Right cardiac atrium (tissue), 5 donors: ENCODE measurements at regions of chr3 and their contacts with region 1.

Region 1: DNA sequence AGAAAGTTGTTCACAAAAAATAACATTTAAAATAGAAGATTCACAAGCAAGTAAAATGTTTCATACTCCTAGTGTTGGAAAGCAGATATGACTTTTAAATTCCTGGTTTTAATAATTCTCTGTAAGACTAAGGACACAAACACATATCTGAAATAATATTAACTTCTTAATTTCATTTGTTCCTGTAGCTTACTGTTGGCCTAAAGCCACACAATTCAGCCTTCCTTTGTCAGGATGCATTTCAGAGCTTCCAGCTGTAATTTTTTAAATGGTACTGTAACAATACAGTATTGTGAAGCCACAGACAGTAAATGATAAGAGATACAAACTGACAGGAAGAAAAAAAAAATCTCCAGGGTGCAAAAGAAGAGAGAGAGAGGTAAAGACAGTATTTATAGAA is 84.2 kb downstream of the TMCC1 start:
- DNase-seq: no peak
- ATAC-seq: no peak
- H3K4me3 ChIP-seq: no peak overlapping the region
- H3K27ac ChIP-seq: no peak overlapping the region
- H3K4me1 ChIP-seq: peaks cover 1% of the 10 kb centered on the region
- H3K27me3 ChIP-seq: no peaks in the 10 kb centered on the region

Region 2: DNA sequence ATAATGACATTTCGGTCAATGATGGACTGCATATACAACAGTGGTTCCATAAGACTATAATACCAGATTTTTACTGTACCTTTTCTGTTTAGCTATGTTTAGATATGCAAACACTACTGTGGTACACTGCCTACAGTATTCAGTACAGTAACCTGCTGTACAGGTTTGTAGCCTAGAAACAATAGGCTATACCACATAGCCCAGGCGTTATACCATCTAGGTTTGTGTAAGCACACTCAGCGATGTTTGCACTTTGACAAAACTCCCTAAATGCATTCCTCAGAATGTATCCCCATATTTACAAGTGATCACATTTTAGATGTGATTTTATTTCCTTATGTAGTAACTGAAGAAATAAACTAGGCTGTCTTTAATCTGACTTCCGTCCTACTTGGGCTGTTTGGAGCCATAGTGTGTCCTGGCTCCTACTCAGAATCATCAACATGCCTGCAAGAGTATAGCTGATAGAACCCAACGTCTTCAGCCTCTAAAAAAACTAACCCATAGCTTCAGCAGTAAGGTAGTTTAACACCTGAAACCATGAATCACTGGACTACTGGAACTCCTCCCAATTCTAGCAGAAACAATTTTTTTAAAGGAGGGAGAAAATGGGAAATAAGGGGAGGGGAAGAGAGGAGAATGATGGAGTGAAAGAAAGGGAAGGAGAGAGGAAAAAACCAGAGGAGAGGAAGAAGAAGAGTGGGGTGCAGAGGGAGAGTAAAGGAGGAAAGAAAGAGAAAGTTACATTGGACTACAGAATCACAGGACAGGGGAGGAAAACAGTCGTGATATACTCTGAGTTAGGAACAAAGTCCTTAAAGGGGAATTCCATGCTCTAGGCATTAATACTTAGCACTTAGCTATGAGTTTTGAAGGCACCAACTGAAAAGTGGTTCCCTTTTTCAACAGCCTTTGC is 135.2 kb before region 1 on chr3:
- intact Hi-C with region 1: no loop called
- DNase-seq: no peak
- ATAC-seq: no peak
- H3K4me3 ChIP-seq: no peak overlapping the region
- H3K27ac ChIP-seq: no peak overlapping the region
- H3K4me1 ChIP-seq: peaks cover 9% of the 10 kb centered on the region
- H3K27me3 ChIP-seq: no peaks in the 10 kb centered on the region

Region 3: DNA sequence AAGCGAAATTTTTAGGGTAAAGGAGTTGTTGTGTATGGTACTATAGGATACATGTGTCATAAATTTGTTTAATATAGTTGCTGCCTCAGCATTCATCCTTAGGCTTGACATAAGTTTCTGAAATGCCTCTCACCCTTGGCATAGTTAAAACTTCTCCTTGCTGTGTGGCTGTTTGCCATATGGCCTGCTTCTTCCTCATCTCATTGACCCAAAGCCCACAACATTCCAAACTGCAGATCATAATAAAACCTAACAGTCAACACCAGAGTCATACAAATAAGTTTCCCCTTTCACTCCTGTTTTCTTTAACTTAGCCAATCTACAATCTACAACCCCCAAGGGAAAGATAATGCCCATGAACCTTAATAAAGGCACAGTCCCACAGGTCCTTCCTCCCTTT is 52.4 kb before region 1 on chr3:
- intact Hi-C with region 1: loop called in 1 of 4 experiments (anchors 10 kb)
- DNase-seq: no peak
- ATAC-seq: no peak
- H3K4me3 ChIP-seq: no peak overlapping the region
- H3K27ac ChIP-seq: no peak overlapping the region
- H3K4me1 ChIP-seq: no peaks in the 10 kb centered on the region
- H3K27me3 ChIP-seq: no peaks in the 10 kb centered on the region

Region 4: GRCh38 chr3:129950318-129951046 is 141.2 kb after region 1 on chr3:
- intact Hi-C with region 1: no loop called
- DNase-seq: no peak
- ATAC-seq: no peak
- H3K4me3 ChIP-seq: no peak overlapping the region
- H3K27ac ChIP-seq: no peak overlapping the region
- H3K4me1 ChIP-seq: no peaks in the 10 kb centered on the region
- H3K27me3 ChIP-seq: no peaks in the 10 kb centered on the region

Region 5: GRCh38 chr3:129984125-129984524 is 174.8 kb after region 1 on chr3:
- intact Hi-C with region 1: no loop called
- DNase-seq: no peak
- ATAC-seq: no peak
- H3K4me3 ChIP-seq: no peak overlapping the region
- H3K27ac ChIP-seq: no peak overlapping the region
- H3K4me1 ChIP-seq: no peaks in the 10 kb centered on the region
- H3K27me3 ChIP-seq: no peaks in the 10 kb centered on the region